T-cell (primary cell): ENCODE measurements at regions of chr7 and their contacts with region 1.

Region 1: GRCh38 chr7:28395831-28396230 is 16.5 kb upstream of the CREB5 start:
- DNase-seq: no peak
- ATAC-seq: no peak
- H3K4me3 ChIP-seq: no peak overlapping the region
- H3K4me3 Mint-ChIP-seq: no peak overlapping the region
- H3K27ac ChIP-seq: no peak overlapping the region
- H3K27ac Mint-ChIP-seq: no peak overlapping the region
- H3K4me1 ChIP-seq: no peaks in the 10 kb centered on the region
- H3K4me1 Mint-ChIP-seq: no peaks in the 10 kb centered on the region
- H3K27me3 ChIP-seq: peaks cover 0 to 7% of the 10 kb centered on the region in 2 experiments
- H3K27me3 Mint-ChIP-seq: peaks cover 23 to 26% of the 10 kb centered on the region in 2 donors

Region 2: GRCh38 chr7:29401769-29402168 is 1005.9 kb after region 1 on chr7:
- CTCF ChIA-PET with region 1: interaction called in 1 of 2 experiments, 12 read pairs
- POLR2A ChIA-PET with region 1: no interaction called
- DNase-seq: no peak
- ATAC-seq: no peak
- H3K4me3 ChIP-seq: no peak overlapping the region
- H3K4me3 Mint-ChIP-seq: no peak overlapping the region
- H3K27ac ChIP-seq: no peak overlapping the region
- H3K27ac Mint-ChIP-seq: no peak overlapping the region
- H3K4me1 ChIP-seq: no peaks in the 10 kb centered on the region
- H3K4me1 Mint-ChIP-seq: peaks cover 0 to 6% (median 2%) of the 10 kb centered on the region in 3 donors
- H3K27me3 ChIP-seq: no peaks in the 10 kb centered on the region
- H3K27me3 Mint-ChIP-seq: peaks cover 0 to 1% of the 10 kb centered on the region in 2 donors